ENCODE measurements at regions of chr1 and their contacts with region 1.

Region 1: DNA sequence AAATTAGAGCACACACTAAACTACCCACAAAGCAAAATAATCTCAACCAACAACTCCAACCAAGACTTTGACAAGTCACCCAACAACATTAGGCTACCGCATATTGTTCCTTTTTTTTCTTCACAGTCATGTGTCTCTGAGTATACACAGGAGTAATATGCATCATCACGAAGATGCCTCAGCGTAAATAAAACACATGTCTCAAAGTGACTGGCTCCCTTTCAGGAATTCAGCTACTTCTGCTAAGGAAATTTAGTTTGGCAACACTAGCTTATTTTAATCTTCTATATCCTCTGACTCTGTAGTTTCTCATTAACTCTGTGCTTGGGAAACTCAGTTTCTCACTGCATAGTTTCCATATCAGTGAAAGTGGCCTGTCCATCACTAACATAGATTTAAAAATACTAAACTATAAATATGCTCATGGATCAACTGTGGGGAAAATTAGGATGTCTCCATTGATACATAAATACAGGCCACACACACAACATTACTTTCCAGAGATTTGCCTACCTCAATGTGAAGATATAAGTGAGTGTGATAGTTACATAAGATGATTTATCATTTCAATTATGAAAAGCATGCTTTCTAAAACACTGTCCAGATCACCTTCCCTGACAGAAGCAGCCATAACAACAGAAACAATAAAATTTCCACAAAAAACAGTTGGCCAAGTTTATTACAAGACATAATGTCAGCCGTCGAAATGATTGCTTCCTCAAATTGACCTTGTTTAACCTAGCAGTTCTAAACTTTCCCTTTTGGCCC is 113.2 kb downstream of the PTGER3 start:
- DNase-seq: no peak
- H3K4me3 Mint-ChIP-seq: no peak overlapping the region
- H3K27ac Mint-ChIP-seq: no peak overlapping the region
- H3K4me1 Mint-ChIP-seq: peaks cover 9% of the 10 kb centered on the region
- H3K27me3 Mint-ChIP-seq: peaks cover 11% of the 10 kb centered on the region

Region 2: GRCh38 chr1:70752511-70752910 is 181.9 kb before region 1 on chr1:
- intact Hi-C with region 1: loop called (anchors 5 kb)
- DNase-seq: no peak
- H3K4me3 Mint-ChIP-seq: no peak overlapping the region
- H3K27ac Mint-ChIP-seq: no peak overlapping the region
- H3K4me1 Mint-ChIP-seq: peaks cover 37% of the 10 kb centered on the region
- H3K27me3 Mint-ChIP-seq: no peaks in the 10 kb centered on the region

Region 3: GRCh38 chr1:70818401-70818800 is 116.0 kb before region 1 on chr1:
- intact Hi-C with region 1: no loop called
- DNase-seq: no peak
- H3K4me3 Mint-ChIP-seq: no peak overlapping the region
- H3K27ac Mint-ChIP-seq: no peak overlapping the region
- H3K4me1 Mint-ChIP-seq: no peaks in the 10 kb centered on the region
- H3K27me3 Mint-ChIP-seq: peaks cover 4% of the 10 kb centered on the region

Region 4: DNA sequence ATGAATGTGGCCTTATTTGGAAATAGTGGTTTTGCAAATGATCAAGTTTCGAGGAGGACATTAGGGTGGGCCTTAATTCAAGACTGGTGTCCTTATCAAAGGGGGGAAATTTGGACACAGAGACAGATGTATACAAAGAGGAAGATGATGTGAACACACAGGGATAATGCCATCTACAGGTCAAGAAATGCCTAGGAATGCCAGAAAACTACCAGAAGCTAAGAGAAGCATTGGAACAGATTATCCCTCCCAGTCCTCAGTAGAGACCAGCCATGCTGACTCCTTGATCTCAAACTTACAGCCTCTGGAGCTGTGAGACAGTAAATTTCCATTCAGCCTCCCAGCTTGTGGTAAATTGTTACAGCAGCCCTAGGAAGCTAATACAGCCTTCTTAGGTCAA is 38.2 kb before region 1 on chr1:
- intact Hi-C with region 1: loop called (anchors 5 kb)
- DNase-seq: no peak
- H3K4me3 Mint-ChIP-seq: no peak overlapping the region
- H3K27ac Mint-ChIP-seq: no peak overlapping the region
- H3K4me1 Mint-ChIP-seq: peaks cover 7% of the 10 kb centered on the region
- H3K27me3 Mint-ChIP-seq: peaks cover 32% of the 10 kb centered on the region

Region 5: DNA sequence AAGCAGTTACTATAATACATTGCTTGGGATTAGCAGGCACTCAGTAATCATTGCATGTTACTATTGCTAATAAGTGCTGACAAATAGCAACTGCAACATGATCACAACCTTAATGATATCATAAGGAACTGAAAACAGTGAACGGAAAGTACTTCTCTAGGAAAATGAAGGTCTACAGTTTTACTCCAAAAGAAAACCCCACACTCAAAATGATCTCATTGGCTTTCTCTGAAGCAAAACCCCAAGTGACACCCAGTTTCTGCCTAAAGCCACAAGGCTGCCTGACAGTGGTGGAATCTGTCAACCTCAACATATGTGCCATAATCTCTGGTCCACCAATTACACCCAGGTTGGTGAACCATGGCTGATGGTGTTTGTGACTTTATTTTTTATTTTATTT is 24.4 kb before region 1 on chr1:
- intact Hi-C with region 1: loop called (anchors 1 kb)
- DNase-seq: peak; percentile 12
- H3K4me3 Mint-ChIP-seq: no peak overlapping the region
- H3K27ac Mint-ChIP-seq: peak overlapping the region; percentile 56
- H3K4me1 Mint-ChIP-seq: peaks cover 18% of the 10 kb centered on the region
- H3K27me3 Mint-ChIP-seq: peaks cover 8% of the 10 kb centered on the region

Measured in activated T-helper 2 cell treated with anti-CD3 and anti-CD28 coated beads, Interferon-gamma antibody, Interleukin-2, Interleukin-4, amounts not matched to agents 10 μg/mL and 5 μg/mL and 100 μg/mL, durations not matched to agents 14 hours and 24 hours and 36 hours (primary cell).